Heart left ventricle (tissue), 16 donors: ENCODE measurements at regions of chr16 and their contacts with region 1.

Region 1: DNA sequence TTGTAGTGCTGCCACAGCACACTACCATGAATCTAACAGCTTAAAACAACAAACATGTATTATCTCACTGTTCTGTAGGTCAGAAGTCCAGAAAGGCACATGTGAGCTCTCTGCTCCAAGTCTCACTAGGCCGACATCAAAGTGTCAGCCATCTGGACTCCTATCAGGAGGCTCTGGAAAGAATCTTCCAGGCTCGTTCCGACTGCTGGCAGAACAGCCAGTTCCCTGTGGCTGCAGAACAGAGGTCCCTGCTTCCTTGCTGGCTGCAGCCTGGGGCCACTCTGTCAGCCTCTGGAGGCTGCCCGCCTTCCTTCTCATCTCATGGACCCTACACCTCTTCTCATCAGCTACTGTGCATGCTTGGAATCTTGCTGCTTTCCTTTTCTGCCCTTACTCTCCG is 168.9 kb downstream of the CBLN1 start:
- DNase-seq: peak; percentile 41 to 85 (median 67)
- ATAC-seq: peak; percentile 97 to 99 (median 97)
- H3K4me3 ChIP-seq: no peak overlapping the region
- H3K27ac ChIP-seq: peak overlapping the region in 8 of 12 donors; percentile 31 to 69 (median 62)
- H3K4me1 ChIP-seq: peaks cover 0 to 25% (median 5%) of the 10 kb centered on the region in 12 donors
- H3K27me3 ChIP-seq: no peaks in the 10 kb centered on the region
- CTCF ChIP-seq: no peak
- POLR2A ChIP-seq: no peak

Region 2: GRCh38 chr16:48949636-48950035 is 163.1 kb before region 1 on chr16:
- intact Hi-C with region 1: loop called in 1 of 10 experiments (anchors 5 kb)
- DNase-seq: no peak
- ATAC-seq: no peak
- H3K4me3 ChIP-seq: no peak overlapping the region
- H3K27ac ChIP-seq: peak overlapping the region in 1 of 12 donors; percentile 51
- H3K4me1 ChIP-seq: peaks cover 0 to 19% (median 0%) of the 10 kb centered on the region in 12 donors
- H3K27me3 ChIP-seq: no peaks in the 10 kb centered on the region
- CTCF ChIP-seq: no peak
- POLR2A ChIP-seq: no peak

Region 3: GRCh38 chr16:49330562-49331201 is 217.9 kb after region 1 on chr16:
- intact Hi-C with region 1: no loop called
- DNase-seq: no peak
- ATAC-seq: no peak
- H3K4me3 ChIP-seq: no peak overlapping the region
- H3K27ac ChIP-seq: no peak overlapping the region
- H3K4me1 ChIP-seq: no peaks in the 10 kb centered on the region
- H3K27me3 ChIP-seq: no peaks in the 10 kb centered on the region
- CTCF ChIP-seq: no peak
- POLR2A ChIP-seq: no peak